ENCODE measurements at regions of chr20 and their contacts with region 1.

Region 1: DNA sequence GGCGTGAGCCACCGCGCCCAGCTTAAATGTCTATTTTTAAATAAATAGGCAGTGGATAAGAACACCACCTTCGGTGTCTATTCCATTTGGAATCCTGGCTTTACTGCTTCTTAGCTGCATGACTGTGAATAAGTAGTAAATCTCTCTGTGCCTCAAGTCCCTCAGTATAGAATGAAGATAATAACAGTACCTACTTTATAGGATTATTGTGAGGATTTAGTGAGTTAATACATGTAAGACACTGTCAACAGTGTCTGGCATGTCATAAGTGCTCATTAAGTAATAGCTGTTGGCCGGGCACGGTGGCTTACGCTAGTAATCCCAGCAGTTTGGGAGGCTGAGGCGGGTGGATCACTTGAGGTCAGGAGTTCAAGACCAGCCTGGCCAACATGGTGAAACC is 10.1 kb downstream of the TPX2 start:
- DNase-seq: no peak

Region 2: GRCh38 chr20:31738729-31739561 is 10.3 kb before region 1 on chr20 and contains the start of gene TPX2:
- CTCF ChIA-PET with region 1: no interaction called
- POLR2A ChIA-PET with region 1: interaction called, 10 read pairs
- DNase-seq: peak; percentile 98

Region 3: GRCh38 chr20:31760519-31761240 is 11.5 kb after region 1 on chr20:
- CTCF ChIA-PET with region 1: no interaction called
- POLR2A ChIA-PET with region 1: no interaction called
- DNase-seq: no peak

Region 4: GRCh38 chr20:31781945-31782344 is 32.7 kb after region 1 on chr20:
- CTCF ChIA-PET with region 1: no interaction called
- POLR2A ChIA-PET with region 1: no interaction called
- DNase-seq: no peak